K562 (cell line): ENCODE measurements at regions of chr4 and their contacts with region 1.

Region 1: DNA sequence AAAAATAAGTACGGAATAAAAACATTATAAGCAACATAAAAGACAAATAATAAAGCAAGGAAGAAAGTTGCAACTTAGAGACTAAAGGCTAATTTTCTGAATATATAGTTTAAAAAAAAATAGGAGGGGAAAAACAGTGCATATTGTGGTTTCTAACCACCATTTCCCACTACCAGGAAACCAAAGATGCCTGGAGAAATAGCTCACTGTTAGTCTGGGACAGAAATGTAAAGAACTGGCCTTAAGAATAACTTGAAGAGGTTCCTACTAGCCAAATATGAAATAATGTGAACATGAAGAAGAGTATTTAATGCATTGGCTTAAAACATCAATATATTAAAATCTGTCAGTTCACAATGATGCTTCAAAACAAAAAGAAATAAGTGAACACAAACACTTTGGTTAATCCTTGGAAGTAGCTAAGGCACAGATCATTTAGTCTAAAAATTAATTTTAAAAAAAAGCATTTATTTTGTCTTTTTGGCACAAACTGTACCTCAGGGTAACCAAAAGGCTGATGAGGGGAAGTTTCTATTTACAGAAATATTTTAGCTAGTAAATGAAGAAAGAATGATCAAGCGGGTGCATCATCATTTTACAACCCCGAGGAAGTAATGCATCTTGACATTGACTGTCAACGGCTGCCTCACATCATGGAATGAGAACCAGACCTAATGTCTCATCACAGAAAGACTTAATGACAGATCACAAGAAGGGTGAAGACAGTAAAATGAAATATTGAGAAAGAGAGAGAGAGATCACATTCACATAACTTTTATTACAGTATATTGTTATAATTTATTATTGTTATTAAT is 297.2 kb upstream of the LDB2 start:
- DNase-seq: no peak
- ATAC-seq: no peak
- H3K4me3 ChIP-seq: no peak overlapping the region
- H3K27ac ChIP-seq: no peak overlapping the region
- H3K4me1 ChIP-seq: no peaks in the 10 kb centered on the region
- H3K27me3 ChIP-seq: no peaks in the 10 kb centered on the region
- CTCF ChIP-seq: no peak
- EP300 ChIP-seq: no peak
- POLR2A ChIP-seq: no peak
- RAD21 ChIP-seq: no peak

Region 2: DNA sequence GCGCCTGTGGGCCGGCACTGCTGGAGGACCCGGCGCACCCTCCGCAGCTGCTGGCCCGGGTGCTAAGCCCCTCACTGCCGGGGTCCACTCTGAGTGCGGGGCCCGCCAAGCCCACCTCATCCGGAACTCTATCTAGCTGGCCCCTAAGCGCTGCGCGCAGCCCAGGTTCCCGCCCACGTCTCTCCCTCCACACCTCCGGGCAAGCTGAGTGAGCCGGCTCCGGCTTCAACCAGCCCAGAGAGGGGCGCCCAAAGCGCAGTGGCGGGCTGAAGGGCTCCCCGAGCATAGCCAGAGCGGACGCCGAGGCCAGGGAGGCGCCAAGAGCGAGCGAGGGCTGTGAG is 241.1 kb after region 1 on chr4:
- CTCF ChIA-PET with region 1: no interaction called
- POLR2A ChIA-PET with region 1: no interaction called
- in situ Hi-C with region 1: no loop called
- intact Hi-C with region 1: loop called (anchors 10 kb)
- DNase-seq: no peak
- ATAC-seq: peak; percentile 66
- H3K4me3 ChIP-seq: no peak overlapping the region
- H3K27ac ChIP-seq: no peak overlapping the region
- H3K4me1 ChIP-seq: peaks cover 0 to 10% of the 10 kb centered on the region in 2 experiments; a peak in 2 of 5 replicates
- H3K27me3 ChIP-seq: peaks cover 0 to 27% of the 10 kb centered on the region in 2 experiments; a peak in 3 of 5 replicates
- CTCF ChIP-seq: no peak
- EP300 ChIP-seq: no peak
- POLR2A ChIP-seq: no peak
- RAD21 ChIP-seq: no peak